ENCODE measurements at regions of chr12 and their contacts with region 1.

Region 1: DNA sequence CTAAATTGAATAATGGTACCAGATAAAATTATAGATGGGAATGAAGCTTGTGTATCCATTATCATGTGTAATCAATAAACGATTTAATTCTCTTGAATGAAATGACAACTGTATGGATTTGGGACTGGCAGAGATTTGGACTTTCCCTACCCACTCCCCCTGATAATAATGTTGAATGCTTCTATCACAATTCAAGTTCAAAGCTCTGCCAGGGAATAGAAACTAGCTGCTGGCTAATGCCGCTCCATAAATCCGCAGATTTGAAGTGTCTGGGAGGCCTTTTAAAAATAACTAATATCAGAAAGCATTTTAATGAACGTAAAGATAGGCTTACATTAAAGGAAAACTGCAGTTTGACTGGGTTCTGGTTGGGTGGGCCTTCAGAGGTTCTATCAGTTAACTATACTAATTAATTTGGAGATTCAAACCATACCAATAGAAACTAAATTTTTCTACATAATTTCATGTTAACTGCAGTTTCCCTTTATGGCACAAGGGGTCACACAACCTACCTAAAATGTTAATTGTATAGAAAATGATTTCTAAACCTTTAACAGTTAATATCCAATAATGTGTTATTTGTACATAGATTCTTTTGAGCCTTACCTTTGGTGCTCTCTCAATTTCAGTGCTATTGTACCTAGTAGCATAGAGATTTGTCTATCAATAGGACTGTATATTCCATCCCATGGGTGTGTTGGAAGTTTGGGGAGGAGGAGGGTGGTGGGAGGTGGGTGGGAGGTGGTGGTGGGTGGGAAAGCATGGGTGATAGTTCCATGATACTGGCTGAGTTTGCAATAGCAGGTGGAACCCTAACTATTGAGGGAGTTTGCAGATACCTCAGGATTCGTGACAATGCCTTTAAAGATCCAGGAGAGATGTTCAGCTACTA is 4.9 kb downstream of the HNRNPA1 start:
- DNase-seq: no peak
- H3K4me3 ChIP-seq: peak overlapping the region in 1 of 4 experiments; percentile 33; a peak in 2 of 8 replicates
- H3K27ac ChIP-seq: no peak overlapping the region
- H3K4me1 ChIP-seq: peaks cover 0 to 7% (median 3%) of the 10 kb centered on the region in 4 experiments; a peak in 5 of 7 replicates
- H3K27me3 ChIP-seq: no peaks in the 10 kb centered on the region
- CTCF ChIP-seq: no peak
- EP300 ChIP-seq: no peak
- POLR2A ChIP-seq: no peak; a peak in 1 of 3 replicates
- RAD21 ChIP-seq: no peak

Region 2: GRCh38 chr12:54082397-54082892 is 203.0 kb before region 1 on chr12:
- CTCF ChIA-PET with region 1: no interaction called
- POLR2A ChIA-PET with region 1: no interaction called
- DNase-seq: no peak
- H3K4me3 ChIP-seq: peak overlapping the region in 1 of 4 experiments; percentile 26; a peak in 1 of 8 replicates
- H3K27ac ChIP-seq: no peak overlapping the region
- H3K4me1 ChIP-seq: peaks cover 0 to 3% (median 1%) of the 10 kb centered on the region in 4 experiments; a peak in 2 of 7 replicates
- H3K27me3 ChIP-seq: peaks cover 71 to 95% (median 88%) of the 10 kb centered on the region in 4 experiments
- CTCF ChIP-seq: no peak
- EP300 ChIP-seq: no peak
- POLR2A ChIP-seq: no peak
- RAD21 ChIP-seq: no peak

Region 3: GRCh38 chr12:54159140-54159539 is 126.3 kb before region 1 on chr12:
- CTCF ChIA-PET with region 1: no interaction called
- POLR2A ChIA-PET with region 1: no interaction called
- DNase-seq: peak; percentile 61 to 88
- H3K4me3 ChIP-seq: peak overlapping the region in 1 of 4 experiments; percentile 26; a peak in 1 of 8 replicates
- H3K27ac ChIP-seq: no peak overlapping the region
- H3K4me1 ChIP-seq: peaks cover 0 to 19% (median 13%) of the 10 kb centered on the region in 4 experiments; a peak in 6 of 7 replicates
- H3K27me3 ChIP-seq: peaks cover 0 to 16% (median 8%) of the 10 kb centered on the region in 4 experiments; a peak in 5 of 7 replicates
- CTCF ChIP-seq: peak; percentile 33 to 62 (median 57); a peak in 3 of 4 replicates
- EP300 ChIP-seq: no peak
- POLR2A ChIP-seq: no peak
- RAD21 ChIP-seq: peak; percentile 5 to 29; a peak in 2 of 4 replicates

Region 4: GRCh38 chr12:54173066-54173726 is 112.2 kb before region 1 on chr12:
- CTCF ChIA-PET with region 1: no interaction called
- POLR2A ChIA-PET with region 1: no interaction called
- DNase-seq: peak in 1 of 2 experiments; percentile 66
- H3K4me3 ChIP-seq: peak overlapping the region; percentile 34 to 58 (median 42); a peak in 5 of 8 replicates
- H3K27ac ChIP-seq: no peak overlapping the region
- H3K4me1 ChIP-seq: peaks cover 0 to 8% (median 3%) of the 10 kb centered on the region in 4 experiments; a peak in 4 of 7 replicates
- H3K27me3 ChIP-seq: peaks cover 42 to 57% (median 51%) of the 10 kb centered on the region in 4 experiments
- CTCF ChIP-seq: no peak
- EP300 ChIP-seq: no peak
- POLR2A ChIP-seq: no peak
- RAD21 ChIP-seq: no peak

Region 5: DNA sequence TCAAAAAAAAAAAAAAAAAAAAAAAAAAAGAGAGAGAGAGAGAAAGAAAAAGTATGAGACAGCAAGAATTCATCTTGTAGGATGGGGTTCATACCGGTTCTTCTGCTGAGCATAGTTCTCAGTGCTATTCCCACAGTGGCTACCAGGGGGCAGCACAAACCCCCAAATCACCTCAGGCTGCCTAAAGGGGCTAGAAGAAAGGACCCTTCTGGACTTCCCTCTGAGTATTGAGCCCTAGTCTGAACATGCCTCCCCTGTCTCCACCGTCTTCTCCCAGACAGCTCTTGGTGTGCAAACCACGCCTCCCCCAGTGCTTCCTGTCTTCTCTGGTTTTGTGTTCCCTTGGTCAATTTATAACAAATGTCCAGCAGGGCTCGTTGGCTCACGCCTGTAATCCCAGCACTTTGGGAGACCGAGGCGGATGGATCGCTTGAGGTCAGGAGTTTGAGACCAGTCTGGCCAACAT is 65.3 kb before region 1 on chr12:
- CTCF ChIA-PET with region 1: interaction called, 9 read pairs
- POLR2A ChIA-PET with region 1: interaction called, 52 read pairs
- DNase-seq: peak in 1 of 2 experiments; percentile 94
- H3K4me3 ChIP-seq: no peak overlapping the region
- H3K27ac ChIP-seq: no peak overlapping the region
- H3K4me1 ChIP-seq: peaks cover 0 to 20% (median 15%) of the 10 kb centered on the region in 4 experiments; a peak in 6 of 7 replicates
- H3K27me3 ChIP-seq: peaks cover 1 to 36% (median 25%) of the 10 kb centered on the region in 4 experiments; a peak in 6 of 7 replicates
- CTCF ChIP-seq: peak; percentile 73 to 90 (median 84)
- EP300 ChIP-seq: no peak
- POLR2A ChIP-seq: no peak
- RAD21 ChIP-seq: peak; percentile 78 to 84

Region 6: GRCh38 chr12:54251667-54252284 is 33.6 kb before region 1 on chr12:
- CTCF ChIA-PET with region 1: interaction called, 90 read pairs
- POLR2A ChIA-PET with region 1: interaction called, 1,006 read pairs
- DNase-seq: no peak
- H3K4me3 ChIP-seq: no peak overlapping the region
- H3K27ac ChIP-seq: no peak overlapping the region
- H3K4me1 ChIP-seq: no peaks in the 10 kb centered on the region
- H3K27me3 ChIP-seq: no peaks in the 10 kb centered on the region
- CTCF ChIP-seq: peak in 2 of 3 experiments; percentile 41 to 55; a peak in 2 of 4 replicates
- EP300 ChIP-seq: no peak
- POLR2A ChIP-seq: no peak
- RAD21 ChIP-seq: peak; percentile 56 to 62

Region 7: GRCh38 chr12:54306925-54307741 is 21.7 kb after region 1 on chr12:
- CTCF ChIA-PET with region 1: interaction called, 618 read pairs
- POLR2A ChIA-PET with region 1: interaction called, 105 read pairs
- DNase-seq: no peak
- H3K4me3 ChIP-seq: no peak overlapping the region
- H3K27ac ChIP-seq: no peak overlapping the region
- H3K4me1 ChIP-seq: peaks cover 4 to 18% (median 12%) of the 10 kb centered on the region in 4 experiments
- H3K27me3 ChIP-seq: no peaks in the 10 kb centered on the region
- CTCF ChIP-seq: no peak
- EP300 ChIP-seq: no peak
- POLR2A ChIP-seq: no peak
- RAD21 ChIP-seq: no peak

Region 8: DNA sequence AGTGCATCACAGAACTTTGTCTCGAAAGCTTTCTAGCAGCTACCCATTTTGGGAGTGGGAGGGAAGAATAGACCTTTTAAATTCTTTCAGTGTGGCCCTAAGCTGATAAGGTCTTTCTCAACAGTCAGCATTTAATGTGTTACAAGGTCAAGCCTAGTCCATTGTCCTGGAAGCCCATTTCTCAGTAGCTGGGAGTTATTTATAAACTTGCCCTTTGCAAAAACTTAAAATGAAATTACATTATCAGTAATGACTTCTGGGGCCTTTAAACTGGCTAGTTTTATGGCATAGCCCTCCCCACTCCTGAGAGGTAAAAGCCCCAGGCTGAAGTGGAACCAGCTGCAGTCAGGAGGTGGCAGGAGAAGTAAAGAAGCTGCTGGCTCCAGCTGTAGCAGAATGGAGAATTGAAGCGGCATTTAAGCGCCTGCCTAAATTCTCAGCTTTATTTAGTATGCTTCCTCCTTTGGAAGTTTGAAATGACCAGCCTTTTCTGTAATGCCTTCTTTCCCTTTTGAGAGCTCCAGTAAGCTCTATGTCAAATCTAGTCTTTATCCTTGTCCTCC is 52.0 kb after region 1 on chr12:
- CTCF ChIA-PET with region 1: interaction called, 618 read pairs
- POLR2A ChIA-PET with region 1: interaction called, 166 read pairs
- DNase-seq: no peak
- H3K4me3 ChIP-seq: no peak overlapping the region
- H3K27ac ChIP-seq: no peak overlapping the region
- H3K4me1 ChIP-seq: no peaks in the 10 kb centered on the region
- H3K27me3 ChIP-seq: no peaks in the 10 kb centered on the region
- CTCF ChIP-seq: no peak
- EP300 ChIP-seq: no peak
- POLR2A ChIP-seq: no peak
- RAD21 ChIP-seq: peak in 1 of 2 experiments; percentile 26; a peak in 1 of 4 replicates

Region 9: DNA sequence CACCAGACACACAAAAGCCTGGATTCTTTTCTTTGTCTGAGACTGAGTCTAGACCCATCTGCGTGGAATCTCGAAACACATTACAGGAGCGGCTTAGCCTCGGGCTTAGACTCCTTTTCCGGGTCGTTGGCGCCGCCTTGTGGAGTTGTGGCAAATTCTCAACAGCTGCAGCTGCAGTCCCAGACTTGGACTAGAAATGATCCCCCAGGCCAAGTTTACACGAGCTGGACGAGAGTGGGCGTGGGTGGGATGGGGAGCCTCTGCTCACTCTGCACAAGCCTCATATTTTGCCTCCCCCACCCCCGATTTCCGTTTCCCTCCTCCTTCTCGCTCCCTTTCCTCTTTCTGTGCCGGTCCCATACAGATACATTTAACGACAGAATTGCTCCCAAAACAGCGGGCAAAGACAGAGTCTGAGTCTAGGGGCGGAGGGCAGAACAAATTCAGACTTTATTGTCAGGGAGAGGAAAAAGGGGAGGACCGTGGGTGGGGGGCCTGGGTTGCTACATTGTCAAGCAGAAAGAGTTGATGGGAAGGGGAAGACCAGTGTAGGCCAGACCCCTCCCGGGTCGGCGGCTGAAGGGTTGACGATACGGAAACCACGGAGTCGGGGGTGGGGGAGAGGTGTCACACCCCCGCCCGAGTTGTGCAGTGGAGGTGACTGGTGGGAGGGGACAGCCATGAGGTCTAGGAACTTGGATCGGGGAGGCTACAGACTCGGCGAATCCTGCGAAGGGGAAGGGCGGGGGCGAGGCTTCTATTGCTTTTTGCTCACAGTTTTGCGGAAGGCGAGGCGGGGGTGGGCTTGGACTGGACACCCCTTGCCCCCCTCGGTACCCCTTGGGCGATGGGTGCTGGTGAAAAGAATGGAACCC is 83.5 kb after region 1 on chr12:
- CTCF ChIA-PET with region 1: interaction called, 251 read pairs
- POLR2A ChIA-PET with region 1: interaction called, 133 read pairs
- DNase-seq: peak in 1 of 2 experiments; percentile 90
- H3K4me3 ChIP-seq: peak overlapping the region; percentile 4 to 64 (median 17); a peak in 5 of 8 replicates
- H3K27ac ChIP-seq: no peak overlapping the region
- H3K4me1 ChIP-seq: peaks cover 0 to 11% (median 6%) of the 10 kb centered on the region in 4 experiments; a peak in 5 of 7 replicates
- H3K27me3 ChIP-seq: peaks cover 0 to 16% (median 12%) of the 10 kb centered on the region in 4 experiments; a peak in 6 of 7 replicates
- CTCF ChIP-seq: peak; percentile 90 to 94 (median 94)
- EP300 ChIP-seq: no peak
- POLR2A ChIP-seq: no peak
- RAD21 ChIP-seq: peak; percentile 84 to 88

Measured in H1 (cell line).